ENCODE measurements at regions of chr14 and their contacts with region 1.

Region 1: GRCh38 chr14:54642801-54643697 is 76.1 kb downstream of the SAMD4A start:
- DNase-seq: no peak
- H3K4me3 ChIP-seq: no peak overlapping the region
- H3K27ac ChIP-seq: no peak overlapping the region
- H3K4me1 ChIP-seq: no peaks in the 10 kb centered on the region
- H3K27me3 ChIP-seq: no peaks in the 10 kb centered on the region
- CTCF ChIP-seq: peak in 1 of 2 donors; percentile 18

Region 2: GRCh38 chr14:54549862-54550261 is 93.2 kb before region 1 on chr14:
- CTCF ChIA-PET with region 1: no interaction called
- dilution Hi-C with region 1: no loop called
- in situ Hi-C with region 1: no loop called
- intact Hi-C with region 1: no loop called
- DNase-seq: no peak
- H3K4me3 ChIP-seq: no peak overlapping the region
- H3K27ac ChIP-seq: no peak overlapping the region
- H3K4me1 ChIP-seq: no peaks in the 10 kb centered on the region
- H3K27me3 ChIP-seq: no peaks in the 10 kb centered on the region
- CTCF ChIP-seq: no peak

Region 3: GRCh38 chr14:54883624-54884023 is 240.6 kb after region 1 on chr14:
- CTCF ChIA-PET with region 1: interaction called, 20 read pairs
- dilution Hi-C with region 1: no loop called
- in situ Hi-C with region 1: no loop called
- intact Hi-C with region 1: no loop called
- DNase-seq: peak; percentile 37
- H3K4me3 ChIP-seq: no peak overlapping the region
- H3K27ac ChIP-seq: peak overlapping the region; percentile 12
- H3K4me1 ChIP-seq: peaks cover 14% of the 10 kb centered on the region
- H3K27me3 ChIP-seq: no peaks in the 10 kb centered on the region
- CTCF ChIP-seq: no peak

Measured in mammary epithelial cell (primary cell).